Dendritic cell treated with granulocyte-macrophage colony-stimulating factor and Interleukin-4, amounts not matched to agents 40 ng/mL and 50 ng/mL, for 4 days (primary cell): ENCODE measurements at regions of chr1 and their contacts with region 1.

Region 1: DNA sequence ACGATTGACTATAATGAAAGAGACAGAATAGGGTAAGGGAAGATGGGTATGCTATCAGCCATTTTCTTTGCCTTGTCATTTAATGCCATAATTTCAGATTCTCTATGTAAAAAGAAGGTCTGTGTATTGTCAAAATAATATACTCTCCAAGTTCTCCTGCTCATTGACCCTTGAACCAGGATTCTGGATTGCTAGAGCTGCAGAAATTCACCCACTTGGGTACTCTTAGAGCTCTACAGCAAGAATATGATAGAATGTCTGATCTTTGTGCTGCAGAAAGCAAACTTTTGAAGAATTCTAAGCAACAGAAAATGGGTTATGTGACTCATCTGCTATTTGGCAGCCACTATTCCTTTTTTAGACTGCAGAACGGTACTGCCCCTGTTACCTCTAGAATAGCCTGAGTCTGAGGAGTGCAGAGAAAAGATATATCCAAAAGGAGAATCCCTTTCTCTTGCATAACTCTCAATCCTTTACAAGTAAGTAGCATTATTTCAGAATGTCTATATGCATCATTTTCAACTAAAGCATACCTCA is 78.2 kb upstream of the TENT5C start:
- H3K4me3 Mint-ChIP-seq: no peak overlapping the region
- H3K27ac Mint-ChIP-seq: no peak overlapping the region
- H3K4me1 Mint-ChIP-seq: no peaks in the 10 kb centered on the region
- H3K27me3 Mint-ChIP-seq: no peaks in the 10 kb centered on the region

Region 2: DNA sequence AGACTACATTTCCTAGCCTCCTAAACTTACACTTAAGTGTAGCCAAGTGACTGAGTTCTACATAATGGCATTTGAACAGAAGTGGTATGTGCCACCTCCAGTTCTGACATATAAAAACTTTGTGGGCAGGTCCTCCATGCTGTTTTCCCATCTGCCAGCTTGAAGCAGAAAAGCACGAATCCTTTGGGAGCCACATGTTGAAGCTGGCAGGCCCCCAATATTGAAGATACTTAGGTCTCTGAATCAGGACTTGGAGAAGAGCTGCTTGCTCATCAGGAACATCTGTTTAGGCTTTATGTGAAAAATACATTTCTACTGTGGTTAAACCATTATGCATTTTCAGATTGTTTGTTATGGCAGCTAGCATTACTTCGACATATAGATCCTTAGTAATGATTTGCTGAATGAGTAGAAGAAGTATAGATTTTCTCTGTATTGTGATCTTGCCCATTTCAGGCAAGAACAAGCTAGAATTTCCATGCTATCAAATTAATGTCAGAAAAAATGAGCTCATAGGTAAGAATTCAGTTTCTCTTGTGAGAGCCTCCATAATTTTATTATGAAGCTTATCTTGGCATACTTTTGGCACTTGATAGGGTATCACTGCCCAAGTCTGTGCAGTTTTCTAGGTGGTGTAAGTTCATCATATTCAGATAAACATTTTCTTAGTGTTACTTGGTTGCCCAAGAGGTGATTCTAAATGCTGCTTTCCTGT is 333.4 kb after region 1 on chr1:
- intact Hi-C with region 1: loop called (anchors 10 kb)
- H3K4me3 Mint-ChIP-seq: no peak overlapping the region
- H3K27ac Mint-ChIP-seq: no peak overlapping the region
- H3K4me1 Mint-ChIP-seq: no peaks in the 10 kb centered on the region
- H3K27me3 Mint-ChIP-seq: no peaks in the 10 kb centered on the region